ENCODE measurements at regions of chr14 and their contacts with region 1.

Region 1: DNA sequence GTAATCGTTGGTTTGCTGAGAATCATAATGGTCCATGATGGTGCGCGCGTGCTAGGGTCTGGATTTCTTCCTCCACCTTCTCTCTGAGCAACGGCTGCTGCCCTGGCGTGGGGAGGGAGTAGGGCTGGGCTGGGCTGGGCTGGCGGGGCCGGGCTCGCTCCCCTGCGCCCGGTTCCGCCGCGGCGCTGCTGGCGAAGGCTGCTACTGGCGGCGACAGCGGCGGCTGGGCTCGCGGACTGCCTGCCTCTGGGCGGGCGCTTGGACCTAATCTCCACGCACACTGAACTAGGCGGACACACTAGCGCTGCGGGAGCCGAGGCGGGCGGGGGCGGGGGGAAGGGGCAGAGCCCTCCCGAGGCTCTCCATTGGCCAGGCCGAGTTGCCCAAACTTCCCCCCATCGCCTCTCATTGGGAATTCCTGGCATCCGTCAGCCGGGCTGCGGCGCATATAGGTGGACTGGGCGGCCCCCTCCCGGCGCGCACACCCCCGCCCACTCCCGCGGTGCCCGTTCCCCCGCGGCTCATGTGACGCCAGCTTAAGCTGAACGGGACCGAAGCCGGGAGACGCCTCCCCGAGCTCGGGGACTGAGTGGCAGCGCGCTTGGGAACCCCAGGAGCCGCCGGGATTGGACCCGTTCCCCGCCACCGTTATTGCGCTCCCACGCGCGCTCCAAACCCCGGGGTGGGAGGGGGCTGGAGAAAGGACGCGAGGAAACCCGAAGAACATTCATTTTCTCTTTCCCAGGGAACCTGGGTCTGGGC is at the start of gene ACTN1:
- DNase-seq: peak in 1 of 2 donors; percentile 98
- H3K4me3 ChIP-seq: peak within 1 kb of the TSS; percentile 75 to 86
- H3K27ac ChIP-seq: peak within 1 kb of the TSS; percentile 96
- H3K4me1 ChIP-seq: peaks cover 46% of the 10 kb centered on the region
- H3K27me3 ChIP-seq: no peaks in the 10 kb centered on the region
- CTCF ChIP-seq: no peak
- POLR2A ChIP-seq: peak in 1 of 2 donors; percentile 90
- total RNA-seq, gene ACTN1: 209 TPM

Region 2: DNA sequence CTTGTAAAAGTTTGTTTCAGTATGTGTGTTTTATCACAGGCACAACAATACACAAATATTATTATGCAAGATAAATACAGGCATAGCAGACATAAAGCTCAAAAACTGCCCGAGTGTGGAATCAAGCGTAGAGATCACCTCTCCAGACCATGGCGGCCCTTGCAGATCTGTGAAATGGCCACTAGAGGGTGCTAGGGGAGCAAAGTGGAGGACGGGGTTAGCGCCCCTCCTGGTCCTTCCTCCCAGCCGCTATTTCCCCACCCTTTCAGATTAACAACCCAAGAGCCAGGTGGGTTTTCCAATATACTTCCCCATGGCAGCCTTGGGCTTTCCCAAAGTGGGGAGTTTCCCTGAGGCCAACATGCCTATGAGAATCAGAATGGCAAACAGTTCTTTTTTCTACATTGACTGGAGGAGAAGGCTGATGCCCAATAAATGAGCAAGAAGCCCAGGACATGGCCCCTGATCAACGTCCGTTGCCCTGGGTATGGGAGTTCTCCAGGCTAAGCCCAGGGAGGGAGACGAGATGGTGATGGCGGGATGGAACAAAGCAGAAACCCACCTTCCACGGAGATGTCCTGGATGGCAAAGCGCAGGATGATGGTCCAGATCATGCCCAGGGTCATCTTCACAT is 67.5 kb before region 1 on chr14:
- intact Hi-C with region 1: loop called (anchors 10 kb)
- DNase-seq: no peak
- H3K4me3 ChIP-seq: no peak overlapping the region
- H3K27ac ChIP-seq: peak overlapping the region; percentile 13
- H3K4me1 ChIP-seq: no peaks in the 10 kb centered on the region
- H3K27me3 ChIP-seq: no peaks in the 10 kb centered on the region
- CTCF ChIP-seq: peak; percentile 88 to 97 (median 91)
- POLR2A ChIP-seq: no peak

Region 3: DNA sequence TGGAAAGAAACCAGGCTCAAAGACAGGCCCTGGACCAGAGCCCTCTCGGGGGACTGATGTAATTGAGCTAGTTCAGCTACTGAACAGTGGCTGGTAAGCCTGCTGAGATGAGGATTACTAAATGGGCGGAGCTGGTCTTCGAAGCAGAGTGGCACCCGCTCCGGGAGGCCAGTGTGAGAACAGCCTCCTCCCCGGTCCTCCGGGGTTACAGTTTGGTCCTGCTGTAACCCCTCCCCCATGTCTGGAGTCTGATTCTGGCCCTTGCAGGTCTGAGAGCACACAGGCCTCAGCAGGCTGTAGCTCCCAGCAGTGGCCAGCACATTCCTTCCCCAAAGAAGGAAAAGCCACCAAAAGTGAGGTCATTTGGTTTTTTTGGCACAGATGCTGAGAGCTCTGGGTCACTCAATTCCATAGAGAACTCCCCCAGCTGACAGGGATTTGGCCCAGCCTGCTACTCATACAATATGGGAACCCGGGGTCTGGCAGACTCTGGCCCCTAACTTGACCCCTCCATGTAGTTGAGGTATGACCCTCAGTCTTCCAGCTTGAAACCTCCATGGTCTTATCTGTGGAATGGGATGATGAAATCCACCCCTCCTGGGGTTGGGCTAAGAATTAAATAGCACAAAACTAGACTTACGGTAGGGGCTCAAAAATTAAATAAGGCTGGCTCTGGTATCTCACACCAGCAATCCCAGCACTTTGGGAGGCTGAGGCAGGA is 39.1 kb before region 1 on chr14:
- intact Hi-C with region 1: loop called (anchors 5 kb)
- DNase-seq: no peak
- H3K4me3 ChIP-seq: peak overlapping the region in 1 of 2 donors; percentile 10
- H3K27ac ChIP-seq: peak overlapping the region; percentile 83
- H3K4me1 ChIP-seq: peaks cover 93% of the 10 kb centered on the region
- H3K27me3 ChIP-seq: no peaks in the 10 kb centered on the region
- CTCF ChIP-seq: no peak
- POLR2A ChIP-seq: no peak

Region 4: GRCh38 chr14:69048456-69048855 is 69.3 kb after region 1 on chr14:
- intact Hi-C with region 1: loop called (anchors 5 kb)
- DNase-seq: no peak
- H3K4me3 ChIP-seq: no peak overlapping the region
- H3K27ac ChIP-seq: peak overlapping the region; percentile 90
- H3K4me1 ChIP-seq: peaks cover 86% of the 10 kb centered on the region
- H3K27me3 ChIP-seq: no peaks in the 10 kb centered on the region
- CTCF ChIP-seq: no peak
- POLR2A ChIP-seq: no peak

Region 5: DNA sequence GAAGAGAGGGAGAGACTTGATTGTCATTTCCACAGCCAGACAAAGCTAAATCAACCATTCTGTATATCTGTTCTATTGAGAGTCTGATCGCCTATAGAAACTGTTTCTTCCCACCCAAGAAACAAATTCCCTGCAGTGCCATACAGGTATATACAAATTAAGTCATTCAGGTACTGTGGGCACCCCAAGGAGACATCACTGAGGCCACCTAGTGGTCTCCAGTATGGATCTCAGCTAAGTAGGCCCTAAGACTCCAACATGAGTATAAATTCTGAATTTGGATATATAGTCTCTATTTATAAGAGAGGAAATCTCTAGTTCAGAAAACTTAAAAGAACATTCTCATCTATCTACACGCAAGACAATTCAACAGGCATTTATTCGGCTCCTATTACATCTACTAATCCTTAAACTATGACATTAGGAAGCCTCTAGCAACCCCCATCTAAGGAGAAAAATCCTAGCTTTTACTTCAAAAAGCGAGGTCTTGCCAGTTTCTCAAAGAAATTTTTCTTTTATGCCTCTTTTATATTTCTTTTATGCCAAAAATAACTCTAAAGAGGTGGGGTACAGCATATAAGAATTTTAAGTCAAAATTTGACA is 111.1 kb after region 1 on chr14:
- intact Hi-C with region 1: loop called (anchors 5 kb)
- DNase-seq: no peak
- H3K4me3 ChIP-seq: no peak overlapping the region
- H3K27ac ChIP-seq: no peak overlapping the region
- H3K4me1 ChIP-seq: peaks cover 46% of the 10 kb centered on the region
- H3K27me3 ChIP-seq: no peaks in the 10 kb centered on the region
- CTCF ChIP-seq: peak in 2 of 3 experiments; percentile 41 to 45
- POLR2A ChIP-seq: no peak

Measured in vagina (tissue), 2 donors.